ENCODE measurements at regions of chr1 and their contacts with region 1.

Region 1: GRCh38 chr1:180662709-180663108 is 30.9 kb downstream of the XPR1 start:
- DNase-seq: no peak
- ATAC-seq: no peak
- H3K4me3 ChIP-seq: no peak overlapping the region
- H3K27ac ChIP-seq: no peak overlapping the region
- H3K4me1 ChIP-seq: no peaks in the 10 kb centered on the region
- H3K27me3 ChIP-seq: no peaks in the 10 kb centered on the region
- CTCF ChIP-seq: no peak
- EP300 ChIP-seq: no peak
- POLR2A ChIP-seq: no peak
- RAD21 ChIP-seq: no peak

Region 2: DNA sequence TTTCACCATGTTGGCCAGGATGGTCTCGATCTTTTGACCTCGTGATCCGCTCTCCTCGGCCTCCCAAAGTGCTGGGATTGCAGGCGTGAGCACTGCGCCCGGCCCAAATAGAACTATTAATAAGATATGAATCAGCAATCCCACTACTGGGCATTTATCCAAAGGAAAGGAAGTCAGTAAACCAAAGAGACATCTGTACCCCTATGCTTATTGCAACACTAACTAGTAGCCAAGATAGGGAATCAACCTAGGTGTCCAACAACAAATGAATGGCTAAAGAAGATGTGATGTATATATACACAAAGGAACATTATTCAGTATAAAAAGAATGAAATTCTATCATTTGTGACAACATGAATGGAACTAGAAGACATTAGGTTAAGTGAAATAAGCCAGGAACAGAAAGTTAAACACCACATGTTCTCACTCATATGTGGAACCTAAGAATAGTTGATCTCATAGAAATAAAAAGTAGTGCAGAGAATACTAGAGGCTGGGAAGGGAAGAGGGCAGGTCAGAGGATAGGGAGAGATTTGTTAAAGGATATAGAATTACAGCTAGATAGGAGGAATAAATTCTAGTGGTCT is 17.9 kb after region 1 on chr1:
- CTCF ChIA-PET with region 1: no interaction called
- POLR2A ChIA-PET with region 1: no interaction called
- RAD21 ChIA-PET with region 1: no interaction called
- SMC1A ChIA-PET with region 1: no interaction called
- in situ Hi-C with region 1: no loop called
- intact Hi-C with region 1: no loop called
- DNase-seq: no peak
- ATAC-seq: no peak
- H3K4me3 ChIP-seq: no peak overlapping the region
- H3K27ac ChIP-seq: no peak overlapping the region
- H3K4me1 ChIP-seq: no peaks in the 10 kb centered on the region
- H3K27me3 ChIP-seq: no peaks in the 10 kb centered on the region
- CTCF ChIP-seq: no peak
- EP300 ChIP-seq: no peak
- POLR2A ChIP-seq: no peak
- RAD21 ChIP-seq: no peak

Region 3: GRCh38 chr1:180734366-180734765 is 71.7 kb after region 1 on chr1:
- CTCF ChIA-PET with region 1: no interaction called
- POLR2A ChIA-PET with region 1: no interaction called
- RAD21 ChIA-PET with region 1: no interaction called
- SMC1A ChIA-PET with region 1: no interaction called
- in situ Hi-C with region 1: loop called (anchors 5 kb)
- intact Hi-C with region 1: no loop called
- DNase-seq: no peak
- ATAC-seq: no peak
- H3K4me3 ChIP-seq: no peak overlapping the region
- H3K27ac ChIP-seq: no peak overlapping the region
- H3K4me1 ChIP-seq: no peaks in the 10 kb centered on the region
- H3K27me3 ChIP-seq: no peaks in the 10 kb centered on the region
- CTCF ChIP-seq: no peak
- EP300 ChIP-seq: no peak
- POLR2A ChIP-seq: no peak
- RAD21 ChIP-seq: no peak